Caco-2 (cell line): ENCODE measurements at regions of chr6 and their contacts with region 1.

Region 1: DNA sequence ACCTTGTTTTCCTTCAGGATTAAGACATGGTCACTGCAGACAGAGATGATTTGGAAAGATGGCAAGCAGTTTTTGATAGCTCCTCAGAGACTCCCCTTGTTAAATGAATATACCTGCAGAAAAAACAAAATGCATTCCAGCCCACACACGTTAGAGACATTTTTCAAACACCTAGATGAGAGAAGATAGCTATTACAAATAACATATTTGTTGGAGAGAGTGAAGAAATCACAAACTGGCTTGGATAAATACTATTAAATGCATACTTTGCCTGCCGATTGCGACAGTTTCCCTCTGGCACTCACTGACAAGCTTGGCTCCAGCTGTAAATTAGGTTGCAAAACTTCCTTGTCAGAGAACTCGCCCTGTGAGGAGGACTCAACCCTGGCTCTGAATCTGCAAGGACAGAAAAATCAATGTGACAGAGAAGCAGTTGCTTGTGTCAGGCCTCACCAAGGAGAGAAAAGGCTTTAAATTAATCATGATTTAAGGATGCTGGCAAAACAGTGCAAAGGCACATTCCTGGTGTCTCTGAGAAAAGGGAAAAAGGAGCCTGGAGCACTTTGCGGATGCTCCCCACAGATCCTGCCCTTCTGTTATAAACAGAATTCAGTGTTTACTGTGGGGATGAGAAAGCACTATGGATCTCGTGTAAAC is 423.7 kb upstream of the MARCKS start:
- DNase-seq: peak; percentile 76 to 78
- H3K4me3 ChIP-seq: no peak overlapping the region
- H3K4me3 Mint-ChIP-seq: peak overlapping the region; percentile 37
- H3K27ac Mint-ChIP-seq: peak overlapping the region; percentile 52
- H3K4me1 ChIP-seq: peaks cover 19% of the 10 kb centered on the region
- H3K4me1 Mint-ChIP-seq: peaks cover 15% of the 10 kb centered on the region
- H3K27me3 ChIP-seq: no peaks in the 10 kb centered on the region
- H3K27me3 Mint-ChIP-seq: no peaks in the 10 kb centered on the region
- CTCF ChIP-seq: no peak

Region 2: DNA sequence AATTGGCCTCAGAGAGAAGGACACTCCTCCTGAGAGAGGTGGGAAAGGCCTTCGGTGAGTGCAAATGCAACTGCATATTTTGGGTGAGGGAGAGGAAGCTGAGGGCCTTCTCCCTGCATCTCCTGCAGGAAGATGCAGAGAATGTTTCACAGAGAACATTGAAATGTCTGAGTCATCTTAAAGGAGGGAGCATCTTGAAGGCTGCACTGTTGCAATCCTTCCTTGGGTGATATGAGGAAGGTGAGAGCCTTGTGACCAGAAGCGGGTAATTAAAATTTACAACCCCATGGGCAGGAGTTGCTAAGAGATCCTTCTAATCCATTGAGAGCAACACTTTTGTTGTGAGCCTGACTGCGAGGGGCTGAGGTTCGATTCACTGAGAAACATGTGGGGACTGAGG is 48.0 kb after region 1 on chr6:
- CTCF ChIA-PET with region 1: no interaction called
- POLR2A ChIA-PET with region 1: no interaction called
- intact Hi-C with region 1: loop called (anchors 1 kb)
- DNase-seq: no peak
- H3K4me3 ChIP-seq: no peak overlapping the region
- H3K4me3 Mint-ChIP-seq: no peak overlapping the region
- H3K27ac Mint-ChIP-seq: no peak overlapping the region
- H3K4me1 ChIP-seq: peaks cover 25% of the 10 kb centered on the region
- H3K4me1 Mint-ChIP-seq: no peaks in the 10 kb centered on the region
- H3K27me3 ChIP-seq: no peaks in the 10 kb centered on the region
- H3K27me3 Mint-ChIP-seq: no peaks in the 10 kb centered on the region
- CTCF ChIP-seq: no peak

Region 3: GRCh38 chr6:113610377-113610988 is 177.0 kb after region 1 on chr6:
- CTCF ChIA-PET with region 1: no interaction called
- POLR2A ChIA-PET with region 1: no interaction called
- intact Hi-C with region 1: no loop called
- DNase-seq: no peak
- H3K4me3 ChIP-seq: no peak overlapping the region
- H3K4me3 Mint-ChIP-seq: no peak overlapping the region
- H3K27ac Mint-ChIP-seq: no peak overlapping the region
- H3K4me1 ChIP-seq: peaks cover 10% of the 10 kb centered on the region; the same call in 1 of the 2 replicates
- H3K4me1 Mint-ChIP-seq: peaks cover 9% of the 10 kb centered on the region
- H3K27me3 ChIP-seq: no peaks in the 10 kb centered on the region
- H3K27me3 Mint-ChIP-seq: no peaks in the 10 kb centered on the region
- CTCF ChIP-seq: no peak